Lower leg skin (tissue), 4 donors: ENCODE measurements at regions of chr11 and their contacts with region 1.

Region 1: DNA sequence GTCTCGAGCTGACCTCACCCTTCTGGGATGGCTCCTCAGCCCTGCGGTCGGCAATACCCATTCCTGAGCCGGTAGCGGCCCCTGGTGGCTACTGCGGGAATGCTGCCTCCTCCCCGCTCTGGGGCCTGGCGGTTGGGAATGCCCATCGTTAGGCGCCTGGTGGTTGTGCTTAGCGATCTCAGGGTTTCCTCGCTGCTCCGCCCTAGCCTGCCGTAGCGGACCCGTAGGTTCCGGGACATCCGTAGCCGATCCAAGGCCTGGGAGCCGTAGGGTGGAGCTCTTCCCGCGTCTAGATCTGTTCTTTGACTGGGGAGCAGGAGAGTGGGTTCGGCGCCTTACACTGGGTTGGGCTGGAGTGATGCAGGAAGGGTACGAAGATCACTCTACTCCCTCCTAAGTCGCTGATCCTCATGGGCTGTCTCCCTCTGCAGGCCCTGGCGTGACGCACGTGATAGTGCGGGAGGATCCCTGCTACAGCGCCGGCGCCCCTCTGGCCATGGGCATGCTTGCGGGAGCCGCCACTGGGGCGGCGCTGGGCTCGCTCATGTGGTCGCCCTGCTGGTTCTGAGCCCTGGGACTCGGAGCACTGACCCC is 14.8 kb downstream of the PLEKHB1 start:
- DNase-seq: peak; percentile 86 to 98
- H3K4me3 ChIP-seq: no peak overlapping the region
- CTCF ChIP-seq: peak in 1 of 3 donors; percentile 90
- POLR2A ChIP-seq: no peak

Region 2: GRCh38 chr11:73625696-73626318 is 35.3 kb before region 1 on chr11:
- intact Hi-C with region 1: loop called (anchors 5 kb)
- DNase-seq: peak; percentile 66 to 94
- H3K4me3 ChIP-seq: no peak overlapping the region
- CTCF ChIP-seq: peak in 1 of 3 donors; percentile 84
- POLR2A ChIP-seq: no peak